Ascending aorta (tissue), 2 donors: ENCODE measurements at regions of chr1 and their contacts with region 1.

Region 1: DNA sequence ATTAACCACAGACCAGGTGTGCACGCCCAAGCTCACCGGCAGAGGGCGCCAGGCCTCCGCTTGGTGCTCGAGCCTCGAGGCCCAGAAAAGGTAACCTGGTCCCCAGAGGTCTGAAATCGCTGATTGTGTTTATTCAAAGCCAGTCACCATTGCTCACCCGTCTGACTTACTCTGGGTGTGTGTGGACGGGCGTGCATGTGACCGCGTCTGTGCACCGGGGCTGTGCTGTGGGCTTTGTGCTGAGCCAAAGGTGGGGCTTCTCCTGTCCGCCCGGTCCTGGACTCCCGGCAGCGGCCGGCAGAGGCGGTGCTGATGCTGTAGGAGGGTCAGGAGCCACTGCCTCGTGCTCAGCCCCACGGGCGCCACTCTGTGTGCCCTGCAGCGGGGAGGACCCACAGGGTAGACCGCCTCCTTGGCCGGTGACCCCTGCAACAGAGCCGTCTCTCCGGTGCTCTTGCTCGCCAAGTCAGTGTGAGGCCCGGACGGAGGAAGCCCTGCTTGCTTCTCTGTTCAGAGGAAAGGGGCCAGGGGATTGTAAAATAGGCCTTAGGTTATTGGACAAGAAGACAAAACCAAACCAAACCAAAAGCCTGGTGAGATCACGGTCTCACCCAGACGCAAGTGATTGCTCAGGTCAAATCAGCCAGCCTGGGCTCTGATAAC is 32.0 kb upstream of the BTG2 start:
- DNase-seq: peak; percentile 90 to 97
- H3K4me3 ChIP-seq: peak overlapping the region; percentile 11 to 42
- H3K27ac ChIP-seq: peak overlapping the region; percentile 91 to 97
- H3K4me1 ChIP-seq: peaks cover 23 to 40% of the 10 kb centered on the region in 2 donors
- H3K27me3 ChIP-seq: no peaks in the 10 kb centered on the region
- CTCF ChIP-seq: peak; percentile 93 to 97 (median 97)

Region 2: GRCh38 chr1:203290261-203291089 is 17.1 kb after region 1 on chr1:
- intact Hi-C with region 1: loop called (anchors 1 kb)
- DNase-seq: peak; percentile 88 to 99
- H3K4me3 ChIP-seq: peak overlapping the region; percentile 37 to 44
- H3K27ac ChIP-seq: peak overlapping the region; percentile 88 to 93
- H3K4me1 ChIP-seq: peaks cover 14 to 33% of the 10 kb centered on the region in 2 donors
- H3K27me3 ChIP-seq: no peaks in the 10 kb centered on the region
- CTCF ChIP-seq: no peak

Region 3: GRCh38 chr1:203326830-203327683 is 53.7 kb after region 1 on chr1:
- intact Hi-C with region 1: loop called (anchors 1 kb)
- DNase-seq: peak; percentile 79 to 97
- H3K4me3 ChIP-seq: peak overlapping the region; percentile 67
- H3K27ac ChIP-seq: peak overlapping the region; percentile 87
- H3K4me1 ChIP-seq: peaks cover 0 to 26% of the 10 kb centered on the region in 2 donors
- H3K27me3 ChIP-seq: no peaks in the 10 kb centered on the region
- CTCF ChIP-seq: no peak

Region 4: GRCh38 chr1:203408486-203409427 is 135.4 kb after region 1 on chr1:
- intact Hi-C with region 1: loop called (anchors 2 kb)
- DNase-seq: peak; percentile 78 to 94
- H3K4me3 ChIP-seq: no peak overlapping the region
- H3K27ac ChIP-seq: peak overlapping the region; percentile 92 to 97
- H3K4me1 ChIP-seq: peaks cover 37 to 56% of the 10 kb centered on the region in 2 donors
- H3K27me3 ChIP-seq: no peaks in the 10 kb centered on the region
- CTCF ChIP-seq: no peak

Region 5: GRCh38 chr1:203463469-203464062 is 190.2 kb after region 1 on chr1:
- intact Hi-C with region 1: loop called (anchors 5 kb)
- DNase-seq: peak in 1 of 2 donors; percentile 79
- H3K4me3 ChIP-seq: peak overlapping the region in 1 of 2 donors; percentile 28
- H3K27ac ChIP-seq: peak overlapping the region; percentile 90 to 91
- H3K4me1 ChIP-seq: peaks cover 43 to 62% of the 10 kb centered on the region in 2 donors
- H3K27me3 ChIP-seq: no peaks in the 10 kb centered on the region
- CTCF ChIP-seq: peak in 1 of 3 experiments; percentile 24

Region 6: DNA sequence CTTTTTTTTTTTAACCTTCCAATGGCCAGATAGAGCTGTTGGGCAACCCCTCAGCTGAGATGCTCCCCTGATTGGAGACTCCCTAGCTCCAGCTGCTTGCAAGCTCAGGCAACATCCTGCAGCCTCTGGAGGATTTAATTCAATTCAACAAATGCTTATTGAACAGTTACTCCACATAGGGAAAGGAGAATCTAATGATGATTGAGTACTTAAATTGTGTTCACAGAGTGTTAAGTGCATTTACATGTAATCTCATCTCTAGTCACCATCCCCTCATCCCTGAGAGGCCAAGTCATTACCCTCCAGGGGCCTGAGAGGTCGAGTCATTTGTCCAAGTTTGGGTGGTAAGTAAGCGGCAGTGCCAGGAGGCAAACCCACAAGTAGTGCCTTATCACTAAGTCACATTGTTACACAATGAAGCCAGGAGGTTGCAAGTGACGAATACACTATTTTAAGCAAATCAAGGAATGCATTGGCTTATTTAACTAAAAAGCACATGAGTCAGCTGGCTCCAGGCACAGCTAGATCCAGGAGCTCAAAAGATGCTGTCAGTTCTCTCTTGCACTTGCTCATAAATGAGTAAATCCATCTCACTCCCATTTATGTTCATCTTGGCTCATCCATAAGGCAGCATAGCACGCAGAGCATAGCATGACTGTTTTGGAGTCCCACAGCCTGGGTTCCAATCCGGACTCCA is 284.9 kb after region 1 on chr1:
- intact Hi-C with region 1: loop called (anchors 5 kb)
- DNase-seq: peak; percentile 63 to 96
- H3K4me3 ChIP-seq: no peak overlapping the region
- H3K27ac ChIP-seq: peak overlapping the region; percentile 95 to 99
- H3K4me1 ChIP-seq: peaks cover 29 to 49% of the 10 kb centered on the region in 2 donors
- H3K27me3 ChIP-seq: no peaks in the 10 kb centered on the region
- CTCF ChIP-seq: no peak